Panc1 (cell line): ENCODE measurements at regions of chr17 and their contacts with region 1.

Region 1: DNA sequence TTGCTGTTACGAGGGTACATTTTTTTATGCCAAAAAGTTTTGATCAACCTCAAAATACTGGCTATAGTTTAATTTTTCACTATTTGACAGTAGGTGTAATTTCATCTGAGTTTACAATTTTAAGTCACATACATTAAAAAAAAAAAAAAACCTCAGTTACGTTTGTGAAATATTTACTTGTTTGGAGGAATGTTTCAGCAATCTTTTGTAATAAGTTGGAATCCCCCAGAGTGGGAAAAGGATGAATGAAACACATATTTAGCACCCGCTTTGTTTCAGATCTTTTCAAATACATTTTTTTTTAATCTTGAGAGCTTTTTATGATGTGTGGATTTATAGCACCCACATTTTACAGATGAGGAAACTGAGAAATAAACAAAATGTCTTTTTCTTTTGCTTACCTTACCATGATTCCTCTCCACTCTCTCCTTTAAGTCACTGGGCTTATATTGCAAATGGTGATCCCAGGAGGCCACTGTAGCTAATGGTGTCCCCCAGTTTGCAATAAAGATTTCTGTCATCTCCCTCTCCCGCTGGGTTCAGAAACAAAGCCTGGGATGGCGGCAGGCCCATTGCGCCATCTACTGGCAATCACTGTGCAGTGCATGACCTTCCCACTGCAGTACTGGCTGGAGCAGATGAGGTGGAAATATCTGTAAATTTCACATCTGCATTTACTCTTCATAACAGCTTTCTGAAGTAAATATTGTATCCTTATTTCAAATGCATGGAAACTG is 27.7 kb downstream of the TBC1D3B start:
- DNase-seq: peak; percentile 56
- ATAC-seq: peak; percentile 96
- H3K4me3 ChIP-seq: no peak overlapping the region
- H3K27ac ChIP-seq: no peak overlapping the region
- H3K4me1 ChIP-seq: peaks cover 2% of the 10 kb centered on the region; the same call in 1 of the 2 replicates
- H3K27me3 ChIP-seq: peaks cover 22% of the 10 kb centered on the region
- CTCF ChIP-seq: peak; percentile 99

Region 2: GRCh38 chr17:35969558-35970380 is 179.0 kb before region 1 on chr17:
- CTCF ChIA-PET with region 1: interaction called, 13 read pairs
- POLR2A ChIA-PET with region 1: no interaction called
- in situ Hi-C with region 1: no loop called
- intact Hi-C with region 1: loop called (anchors 2 kb)
- DNase-seq: peak; percentile 67
- ATAC-seq: peak; percentile 92
- H3K4me3 ChIP-seq: no peak overlapping the region
- H3K27ac ChIP-seq: no peak overlapping the region
- H3K4me1 ChIP-seq: peaks cover 5% of the 10 kb centered on the region; the same call in 1 of the 2 replicates
- H3K27me3 ChIP-seq: no peaks in the 10 kb centered on the region; the same call in 1 of the 2 replicates
- CTCF ChIP-seq: peak; percentile 88

Region 3: DNA sequence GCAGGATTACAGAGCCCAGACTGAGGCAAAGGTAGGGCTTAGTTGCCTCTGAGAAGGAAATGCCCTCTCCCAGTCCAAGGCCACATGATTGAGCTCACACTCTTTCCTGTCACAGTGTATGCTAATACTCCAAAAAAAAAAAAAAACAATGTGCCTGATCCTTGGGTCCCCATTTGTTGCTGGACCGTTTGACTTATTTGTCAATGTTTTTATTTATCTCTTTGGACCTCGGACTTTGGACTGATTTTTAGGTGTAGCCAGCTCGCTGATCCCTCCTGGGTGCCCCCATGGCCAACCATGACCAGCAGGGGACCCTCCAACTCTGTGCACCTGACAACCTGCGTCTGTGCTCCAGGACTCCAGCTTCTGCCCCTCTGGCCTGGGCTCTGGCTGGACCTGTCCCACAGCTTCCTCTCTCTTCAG is 166.8 kb before region 1 on chr17:
- CTCF ChIA-PET with region 1: interaction called, 9 read pairs
- POLR2A ChIA-PET with region 1: interaction called, 14 read pairs
- in situ Hi-C with region 1: no loop called
- intact Hi-C with region 1: no loop called
- DNase-seq: no peak
- ATAC-seq: 0 out of 2 replicates have a peak, but pooled peaks have one; percentile 42
- H3K4me3 ChIP-seq: no peak overlapping the region
- H3K27ac ChIP-seq: no peak overlapping the region
- H3K4me1 ChIP-seq: no peaks in the 10 kb centered on the region
- H3K27me3 ChIP-seq: no peaks in the 10 kb centered on the region; the same call in 1 of the 2 replicates
- CTCF ChIP-seq: no peak; the same call in 1 of the 2 replicates

Region 4: DNA sequence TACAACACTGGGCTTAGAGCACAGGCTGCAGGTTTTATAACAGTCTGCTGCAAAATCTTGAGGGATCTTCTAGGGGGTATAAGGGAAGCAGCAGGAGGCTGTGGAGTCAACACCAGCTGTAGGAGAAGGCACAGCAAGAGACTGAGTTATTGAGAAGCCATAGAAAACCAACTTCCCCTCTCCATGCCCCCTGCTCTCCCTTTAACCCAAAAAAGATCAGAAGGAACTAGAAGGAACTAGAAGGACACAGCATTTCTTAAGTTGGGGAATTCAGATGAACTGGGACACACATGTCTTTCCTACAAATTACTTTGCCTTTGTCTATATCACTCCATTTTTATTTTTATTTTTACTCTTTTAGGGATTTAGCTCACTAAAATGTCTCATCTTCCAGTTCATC is 90.8 kb before region 1 on chr17:
- CTCF ChIA-PET with region 1: no interaction called
- POLR2A ChIA-PET with region 1: no interaction called
- in situ Hi-C with region 1: no loop called
- intact Hi-C with region 1: no loop called
- DNase-seq: no peak
- ATAC-seq: no peak
- H3K4me3 ChIP-seq: no peak overlapping the region
- H3K27ac ChIP-seq: no peak overlapping the region
- H3K4me1 ChIP-seq: no peaks in the 10 kb centered on the region
- H3K27me3 ChIP-seq: peaks cover 2% of the 10 kb centered on the region; the same call in 1 of the 2 replicates
- CTCF ChIP-seq: no peak